ENCODE measurements at regions of chr3 and their contacts with region 1.

Region 1: DNA sequence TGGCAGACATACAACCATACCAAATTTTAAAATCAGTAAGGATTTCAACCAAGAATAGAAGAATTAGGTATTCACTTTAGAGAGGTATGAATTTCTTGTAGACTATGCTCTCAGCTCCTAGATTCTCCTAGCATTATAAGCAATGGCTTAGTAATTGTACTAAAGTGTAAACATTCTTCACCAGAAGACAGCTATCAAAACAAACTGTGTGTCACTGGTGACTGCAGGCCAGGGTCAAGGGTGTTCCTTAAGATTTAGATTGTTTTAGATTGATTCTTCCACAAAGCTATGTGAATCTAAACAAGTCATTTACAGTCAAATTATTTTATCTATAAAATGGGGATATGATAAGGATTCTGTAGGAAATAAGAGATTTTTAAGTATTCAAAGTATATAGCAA is 23.1 kb upstream of the GP5 start:
- DNase-seq: no peak
- ATAC-seq: no peak
- H3K4me3 ChIP-seq: no peak overlapping the region
- H3K4me3 Mint-ChIP-seq: no peak overlapping the region
- H3K27ac ChIP-seq: no peak overlapping the region
- H3K27ac Mint-ChIP-seq: no peak overlapping the region
- H3K4me1 ChIP-seq: no peaks in the 10 kb centered on the region
- H3K4me1 Mint-ChIP-seq: no peaks in the 10 kb centered on the region
- H3K27me3 ChIP-seq: no peaks in the 10 kb centered on the region
- H3K27me3 Mint-ChIP-seq: no peaks in the 10 kb centered on the region

Region 2: GRCh38 chr3:193640728-193641439 is 781.3 kb before region 1 on chr3:
- CTCF ChIA-PET with region 1: interaction called in 1 of 2 experiments, 10 read pairs
- POLR2A ChIA-PET with region 1: no interaction called
- DNase-seq: no peak
- ATAC-seq: no peak
- H3K4me3 ChIP-seq: no peak overlapping the region
- H3K4me3 Mint-ChIP-seq: no peak overlapping the region
- H3K27ac ChIP-seq: no peak overlapping the region
- H3K27ac Mint-ChIP-seq: no peak overlapping the region
- H3K4me1 ChIP-seq: no peaks in the 10 kb centered on the region
- H3K4me1 Mint-ChIP-seq: no peaks in the 10 kb centered on the region
- H3K27me3 ChIP-seq: no peaks in the 10 kb centered on the region
- H3K27me3 Mint-ChIP-seq: no peaks in the 10 kb centered on the region